WTC11 (cell line): ENCODE measurements at regions of chr21 and their contacts with region 1.

Region 1: DNA sequence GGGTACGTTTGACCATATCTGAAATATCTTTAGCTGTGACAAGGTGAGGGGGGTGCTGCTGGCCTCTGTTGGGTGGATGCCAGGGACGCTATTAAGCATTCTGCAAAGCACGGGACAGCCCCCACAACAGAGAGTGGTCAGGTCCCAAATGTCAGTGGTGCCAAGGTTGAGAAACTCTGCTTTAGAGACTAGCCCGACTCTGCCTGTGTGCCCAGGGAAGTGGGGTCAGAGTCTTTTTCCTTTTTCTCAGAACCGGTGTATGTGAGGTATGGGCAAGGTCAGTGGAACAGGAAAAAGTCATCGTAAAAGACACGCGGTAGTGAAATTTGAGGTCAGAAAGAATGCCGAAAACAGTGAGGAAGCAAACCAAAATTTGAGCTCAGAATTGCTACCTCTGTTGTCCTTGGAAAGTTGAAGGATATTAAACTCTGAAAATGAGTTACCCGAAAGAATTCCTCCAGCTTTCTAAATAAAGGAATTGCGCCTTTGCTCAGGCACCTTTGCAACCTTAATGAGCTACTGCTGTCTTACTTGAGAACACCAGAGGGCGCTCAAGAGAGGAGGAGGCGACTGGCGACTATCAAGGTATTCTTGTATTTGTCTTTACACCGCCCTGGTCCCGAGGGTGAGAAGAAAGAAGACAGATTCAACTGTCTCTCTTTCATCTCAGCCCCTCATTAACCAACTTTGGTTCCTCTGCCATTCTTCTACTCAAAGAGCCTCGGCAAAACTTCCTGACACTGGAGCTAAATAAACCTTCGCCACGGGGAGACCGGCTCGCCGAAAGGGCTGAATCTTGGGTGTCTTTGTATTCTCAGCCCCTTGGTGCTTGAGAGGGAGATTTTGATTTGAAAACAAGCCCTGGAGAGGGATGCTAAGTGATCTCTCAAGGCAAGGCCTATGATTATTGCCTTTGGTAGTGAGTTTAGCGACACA is 85.4 kb upstream of the OLIG2 start:
- DNase-seq: peak; percentile 41
- ATAC-seq: peak; percentile 93
- H3K4me3 Mint-ChIP-seq: no peak overlapping the region
- H3K27ac Mint-ChIP-seq: no peak overlapping the region
- H3K4me1 Mint-ChIP-seq: peaks cover 7% of the 10 kb centered on the region
- H3K27me3 Mint-ChIP-seq: peaks cover 4% of the 10 kb centered on the region
- CTCF ChIP-seq: peak; percentile 72

Region 2: GRCh38 chr21:32916522-32917099 is 23.7 kb before region 1 on chr21:
- CTCF ChIA-PET with region 1: interaction called, 15 read pairs
- POLR2A ChIA-PET with region 1: no interaction called
- DNase-seq: no peak
- ATAC-seq: 0 out of 2 replicates have a peak, but pooled peaks have one; percentile 17
- H3K4me3 Mint-ChIP-seq: no peak overlapping the region
- H3K27ac Mint-ChIP-seq: no peak overlapping the region
- H3K4me1 Mint-ChIP-seq: peaks cover 18% of the 10 kb centered on the region
- H3K27me3 Mint-ChIP-seq: no peaks in the 10 kb centered on the region; the same call in 1 of the 2 replicates
- CTCF ChIP-seq: no peak

Region 3: GRCh38 chr21:32929633-32930038 is 10.7 kb before region 1 on chr21:
- CTCF ChIA-PET with region 1: interaction called, 25 read pairs
- POLR2A ChIA-PET with region 1: no interaction called
- DNase-seq: no peak
- ATAC-seq: no peak
- H3K4me3 Mint-ChIP-seq: no peak overlapping the region
- H3K27ac Mint-ChIP-seq: no peak overlapping the region
- H3K4me1 Mint-ChIP-seq: peaks cover 2% of the 10 kb centered on the region; the same call in 1 of the 2 replicates
- H3K27me3 Mint-ChIP-seq: 0 out of 2 replicates have a peak, but pooled peaks cover under 1% of the 10 kb centered on the region
- CTCF ChIP-seq: no peak

Region 4: DNA sequence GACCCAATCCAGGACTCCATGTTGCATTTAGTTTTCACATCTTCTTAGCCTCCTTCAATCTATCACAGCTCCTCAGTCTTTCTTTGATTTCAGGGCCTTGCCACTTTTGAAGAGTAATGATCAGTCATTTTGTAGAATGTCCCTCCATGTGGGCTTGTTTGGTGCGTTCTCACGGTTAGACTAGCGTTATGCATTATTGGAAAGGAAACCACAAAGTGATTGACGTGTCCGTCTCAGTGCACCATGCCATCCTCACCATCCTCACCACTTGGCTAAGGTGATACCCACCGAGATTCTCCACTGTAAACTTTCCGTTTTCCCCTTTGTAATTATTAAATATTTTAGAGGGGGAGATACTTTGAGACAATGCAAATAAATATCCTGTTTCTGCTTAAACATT is 25.8 kb after region 1 on chr21:
- CTCF ChIA-PET with region 1: interaction called, 12 read pairs
- POLR2A ChIA-PET with region 1: no interaction called
- DNase-seq: no peak
- ATAC-seq: no peak
- H3K4me3 Mint-ChIP-seq: no peak overlapping the region
- H3K27ac Mint-ChIP-seq: no peak overlapping the region
- H3K4me1 Mint-ChIP-seq: peaks cover 55% of the 10 kb centered on the region
- H3K27me3 Mint-ChIP-seq: peaks cover 6% of the 10 kb centered on the region; the same call in 1 of the 2 replicates
- CTCF ChIP-seq: no peak

Region 5: GRCh38 chr21:33019885-33020557 is 79.7 kb after region 1 on chr21:
- CTCF ChIA-PET with region 1: interaction called, 23 read pairs
- POLR2A ChIA-PET with region 1: no interaction called
- DNase-seq: peak; percentile 56
- ATAC-seq: peak; percentile 55
- H3K4me3 Mint-ChIP-seq: peak overlapping the region; percentile 60
- H3K27ac Mint-ChIP-seq: no peak overlapping the region
- H3K4me1 Mint-ChIP-seq: peaks cover 41% of the 10 kb centered on the region
- H3K27me3 Mint-ChIP-seq: peaks cover 100% of the 10 kb centered on the region
- CTCF ChIP-seq: no peak

Region 6: GRCh38 chr21:33199516-33200217 is 259.3 kb after region 1 on chr21:
- CTCF ChIA-PET with region 1: interaction called, 41 read pairs
- POLR2A ChIA-PET with region 1: no interaction called
- DNase-seq: peak; percentile 56
- ATAC-seq: peak; percentile 82
- H3K4me3 Mint-ChIP-seq: no peak overlapping the region
- H3K27ac Mint-ChIP-seq: no peak overlapping the region
- H3K4me1 Mint-ChIP-seq: peaks cover 16% of the 10 kb centered on the region
- H3K27me3 Mint-ChIP-seq: peaks cover 4% of the 10 kb centered on the region; the same call in 1 of the 2 replicates
- CTCF ChIP-seq: peak; percentile 34; the same call in 1 of the 2 replicates